MCF 10A (cell line): ENCODE measurements at regions of chr3 and their contacts with region 1.

Region 1: DNA sequence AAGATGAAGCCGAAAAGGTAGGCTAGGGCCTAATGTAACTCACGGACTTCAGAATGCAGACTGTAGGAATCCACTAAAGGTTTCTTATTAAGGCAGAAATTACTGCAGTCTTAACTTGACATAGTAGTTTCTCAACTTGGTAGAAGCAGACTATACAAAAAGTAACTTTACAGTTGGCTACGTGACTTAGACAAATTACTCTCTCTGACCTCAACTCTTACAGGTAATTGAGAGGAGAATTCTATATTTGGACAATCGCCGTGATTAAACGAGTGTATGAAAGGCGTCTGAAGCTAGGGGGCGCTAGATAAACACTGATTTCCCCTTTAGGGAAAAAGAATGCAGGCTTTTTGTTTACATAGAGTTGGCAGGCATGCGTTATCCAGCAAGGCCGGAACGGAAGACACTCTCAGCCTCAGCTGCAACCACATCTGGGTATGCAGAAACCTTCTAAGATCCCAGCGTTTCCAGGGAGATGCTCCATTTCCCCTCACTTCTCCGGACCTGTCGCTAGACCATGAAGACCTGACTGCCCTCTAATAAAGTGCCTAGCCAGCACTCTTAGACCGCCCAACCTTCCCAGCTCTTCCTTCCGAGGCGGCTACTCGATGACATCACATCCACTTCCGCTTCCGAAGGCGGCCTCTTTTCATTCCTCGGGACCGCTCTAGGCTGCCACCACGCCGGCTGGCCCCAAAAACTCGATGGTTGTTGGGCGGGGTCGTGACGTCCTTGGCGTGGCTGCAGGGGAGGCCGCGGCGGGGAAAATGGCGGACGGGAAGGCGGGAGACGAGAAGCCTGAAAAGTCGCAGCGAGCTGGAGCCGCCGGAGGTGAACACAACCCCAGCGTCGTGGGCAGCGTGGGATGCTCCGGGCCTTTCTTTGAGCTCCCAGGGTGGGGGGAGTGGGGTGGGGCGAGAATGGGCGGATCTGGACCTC is at the start of gene PCNP:
- DNase-seq: peak; percentile 99
- H3K4me3 Mint-ChIP-seq: peak within 1 kb of the TSS; percentile 97
- H3K27ac Mint-ChIP-seq: peak within 1 kb of the TSS; percentile 100
- H3K4me1 Mint-ChIP-seq: peaks cover 28% of the 10 kb centered on the region
- H3K27me3 Mint-ChIP-seq: no peaks in the 10 kb centered on the region
- CTCF ChIP-seq: peak; percentile 68
- total RNA-seq, gene PCNP: 229 and 292 TPM in 2 replicates

Region 2: DNA sequence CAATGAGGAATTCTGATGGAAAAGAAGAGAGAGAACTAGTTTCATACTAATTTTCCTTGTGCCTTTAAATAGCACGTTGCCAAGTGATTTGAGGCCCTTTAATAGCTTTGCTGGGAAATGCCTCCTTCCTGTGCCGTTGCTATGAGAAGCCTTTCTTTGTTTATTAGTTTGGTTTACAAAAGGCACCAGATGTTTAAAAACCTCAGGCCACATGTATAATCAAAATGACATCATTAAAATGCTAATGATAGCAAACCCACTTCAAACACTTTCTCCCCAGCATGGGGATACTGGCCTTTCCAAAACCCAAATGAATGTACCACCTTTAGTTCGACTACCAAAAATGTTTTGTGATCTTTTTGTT is 1363.0 kb before region 1 on chr3:
- CTCF ChIA-PET with region 1: no interaction called
- POLR2A ChIA-PET with region 1: no interaction called
- intact Hi-C with region 1: no loop called
- DNase-seq: no peak
- H3K4me3 Mint-ChIP-seq: no peak overlapping the region
- H3K27ac Mint-ChIP-seq: no peak overlapping the region
- H3K4me1 Mint-ChIP-seq: no peaks in the 10 kb centered on the region
- H3K27me3 Mint-ChIP-seq: peaks cover 13% of the 10 kb centered on the region
- CTCF ChIP-seq: no peak

Region 3: GRCh38 chr3:101512646-101513418 is 60.9 kb before region 1 on chr3 and contains the start of gene SENP7:
- CTCF ChIA-PET with region 1: interaction called, 5 read pairs
- POLR2A ChIA-PET with region 1: interaction called, 64 read pairs
- intact Hi-C with region 1: loop called (anchors 2 kb)
- DNase-seq: peak; percentile 88
- H3K4me3 Mint-ChIP-seq: peak within 1 kb of the TSS; percentile 94
- H3K27ac Mint-ChIP-seq: peak within 1 kb of the TSS; percentile 94
- H3K4me1 Mint-ChIP-seq: peaks cover 11% of the 10 kb centered on the region
- H3K27me3 Mint-ChIP-seq: no peaks in the 10 kb centered on the region
- CTCF ChIP-seq: no peak
- total RNA-seq, gene SENP7: 11.9 and 15.0 TPM in 2 replicates

Region 4: GRCh38 chr3:101588616-101589015 is 14.9 kb after region 1 on chr3:
- CTCF ChIA-PET with region 1: interaction called, 3 read pairs
- POLR2A ChIA-PET with region 1: interaction called, 10 read pairs
- intact Hi-C with region 1: no loop called
- DNase-seq: no peak
- H3K4me3 Mint-ChIP-seq: no peak overlapping the region
- H3K27ac Mint-ChIP-seq: no peak overlapping the region
- H3K4me1 Mint-ChIP-seq: no peaks in the 10 kb centered on the region
- H3K27me3 Mint-ChIP-seq: no peaks in the 10 kb centered on the region
- CTCF ChIP-seq: no peak

Region 5: GRCh38 chr3:101676765-101677435 is 103.2 kb after region 1 on chr3 and contains the start of gene ZBTB11:
- CTCF ChIA-PET with region 1: interaction called, 7 read pairs
- POLR2A ChIA-PET with region 1: interaction called, 143 read pairs
- intact Hi-C with region 1: loop called (anchors 2 kb)
- DNase-seq: peak; percentile 100
- H3K4me3 Mint-ChIP-seq: peak within 1 kb of the TSS; percentile 82
- H3K27ac Mint-ChIP-seq: peak within 1 kb of the TSS; percentile 93
- H3K4me1 Mint-ChIP-seq: peaks cover 35% of the 10 kb centered on the region
- H3K27me3 Mint-ChIP-seq: no peaks in the 10 kb centered on the region
- CTCF ChIP-seq: peak; percentile 36
- total RNA-seq, gene ZBTB11: 28.9 and 30.0 TPM in 2 replicates

Region 6: GRCh38 chr3:101724329-101725193 is 150.8 kb after region 1 on chr3 and contains the start of gene CEP97:
- CTCF ChIA-PET with region 1: no interaction called
- POLR2A ChIA-PET with region 1: interaction called, 13 read pairs
- intact Hi-C with region 1: no loop called
- DNase-seq: peak; percentile 93
- H3K4me3 Mint-ChIP-seq: peak within 1 kb of the TSS; percentile 97
- H3K27ac Mint-ChIP-seq: peak within 1 kb of the TSS; percentile 84
- H3K4me1 Mint-ChIP-seq: peaks cover 30% of the 10 kb centered on the region
- H3K27me3 Mint-ChIP-seq: no peaks in the 10 kb centered on the region
- CTCF ChIP-seq: no peak
- total RNA-seq, gene CEP97: 11.5 and 14.2 TPM in 2 replicates